Ascending aorta (tissue), 2 donors: ENCODE measurements at regions of chr1 and their contacts with region 1.

Region 1: GRCh38 chr1:42681741-42682483 is at the start of gene YBX1:
- DNase-seq: peak; percentile 93 to 98
- H3K4me3 ChIP-seq: peak within 1 kb of the TSS; percentile 96
- H3K27ac ChIP-seq: peak within 1 kb of the TSS; percentile 84 to 95
- H3K4me1 ChIP-seq: peaks cover 9 to 40% of the 10 kb centered on the region in 2 donors
- H3K27me3 ChIP-seq: no peaks in the 10 kb centered on the region
- CTCF ChIP-seq: no peak
- total RNA-seq, gene YBX1: 356 TPM

Region 2: GRCh38 chr1:42035830-42036604 is 645.9 kb before region 1 on chr1:
- intact Hi-C with region 1: loop called (anchors 5 kb)
- DNase-seq: peak; percentile 81 to 98
- H3K4me3 ChIP-seq: peak overlapping the region; percentile 91 to 99
- H3K27ac ChIP-seq: peak overlapping the region; percentile 31 to 84
- H3K4me1 ChIP-seq: peaks cover 6 to 7% of the 10 kb centered on the region in 2 donors
- H3K27me3 ChIP-seq: no peaks in the 10 kb centered on the region
- CTCF ChIP-seq: no peak

Region 3: DNA sequence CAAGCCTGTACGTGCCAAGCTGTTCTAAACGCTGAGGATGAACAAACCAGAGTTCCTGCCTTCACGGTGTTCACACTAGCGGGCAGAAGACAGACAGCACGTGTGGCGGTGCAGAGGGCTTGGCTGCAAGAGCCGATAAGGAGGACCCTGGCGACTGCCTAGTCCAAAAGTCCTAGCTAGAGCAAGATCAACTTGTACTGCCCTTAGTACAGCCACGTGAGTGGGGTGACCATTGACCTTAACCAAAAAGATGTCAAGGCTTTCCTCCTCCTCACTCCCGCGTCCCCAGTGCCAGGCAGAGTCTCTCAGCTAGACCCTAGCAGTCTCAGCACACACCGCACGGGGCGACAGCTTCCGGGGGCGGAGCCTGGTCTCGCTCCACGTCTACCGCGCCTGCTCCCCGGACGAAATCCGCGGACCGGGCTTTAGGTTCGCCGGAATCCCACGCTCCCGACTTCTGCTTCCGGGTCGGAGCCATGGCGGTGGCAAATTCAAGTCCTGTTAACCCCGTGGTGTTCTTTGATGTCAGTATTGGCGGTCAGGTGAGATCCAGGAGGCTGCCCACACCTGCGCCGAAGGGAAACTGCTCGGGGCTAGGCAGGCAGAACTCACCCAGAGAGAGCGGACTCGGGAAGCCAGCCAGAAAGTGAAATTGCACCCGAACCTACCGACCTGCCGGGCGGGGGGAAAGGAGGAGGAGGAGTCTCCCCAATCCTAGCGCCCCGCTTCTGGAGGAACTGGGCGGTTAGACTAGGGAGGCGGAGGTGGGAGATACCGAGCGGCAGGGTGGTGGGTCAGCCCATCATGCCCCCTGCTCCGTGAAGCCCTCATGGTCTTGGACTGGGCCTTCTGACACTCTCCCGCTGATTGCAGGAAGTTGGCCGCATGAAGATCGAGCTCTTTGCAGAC is 23.7 kb before region 1 on chr1 and contains the start of gene PPIH:
- intact Hi-C with region 1: loop called (anchors 1 kb)
- DNase-seq: peak; percentile 76 to 97
- H3K4me3 ChIP-seq: peak within 1 kb of the TSS; percentile 65 to 72
- H3K27ac ChIP-seq: peak within 1 kb of the TSS; percentile 67 to 78
- H3K4me1 ChIP-seq: peaks cover 3 to 14% of the 10 kb centered on the region in 2 donors
- H3K27me3 ChIP-seq: no peaks in the 10 kb centered on the region
- CTCF ChIP-seq: peak in 2 of 3 experiments; percentile 37 to 40
- total RNA-seq, gene PPIH: 2.2 TPM

Region 4: DNA sequence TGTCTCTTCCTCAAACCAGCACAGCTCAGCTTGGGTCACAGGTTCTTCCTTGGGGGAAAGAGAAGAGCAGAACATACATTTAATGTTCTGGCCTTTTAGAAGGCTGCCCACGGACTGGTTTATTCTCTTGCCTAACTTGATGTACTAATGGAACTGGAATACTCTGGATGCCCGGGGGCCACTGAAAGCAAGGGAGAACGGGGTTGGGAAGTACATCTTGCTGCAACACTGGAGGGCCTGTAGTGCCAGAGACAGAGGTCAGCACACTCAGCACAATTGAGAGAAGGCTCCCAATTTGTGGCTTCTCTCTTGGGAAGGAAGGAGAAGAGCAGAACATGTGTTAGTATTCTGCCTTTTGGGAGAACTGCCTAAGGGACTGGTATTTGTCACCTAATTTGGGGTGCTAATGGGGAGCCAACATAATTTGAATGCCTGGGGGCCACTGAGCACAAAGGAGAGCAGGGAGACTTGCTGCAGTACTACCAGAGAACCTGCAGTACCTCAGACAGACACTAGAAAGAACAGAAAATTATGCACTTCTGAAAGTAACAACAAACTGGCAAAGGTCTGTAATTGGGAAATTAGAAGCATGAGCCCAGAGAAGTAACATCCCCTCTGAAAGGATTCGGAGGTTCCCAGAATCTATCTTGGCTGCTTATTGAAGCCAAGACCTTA is 178.6 kb after region 1 on chr1:
- intact Hi-C with region 1: no loop called
- DNase-seq: no peak
- H3K4me3 ChIP-seq: no peak overlapping the region
- H3K27ac ChIP-seq: no peak overlapping the region
- H3K4me1 ChIP-seq: no peaks in the 10 kb centered on the region
- H3K27me3 ChIP-seq: no peaks in the 10 kb centered on the region
- CTCF ChIP-seq: no peak

Region 5: GRCh38 chr1:43073490-43074230 is 391.7 kb after region 1 on chr1:
- intact Hi-C with region 1: loop called (anchors 2 kb)
- DNase-seq: peak in 1 of 2 donors; percentile 84
- H3K4me3 ChIP-seq: no peak overlapping the region
- H3K27ac ChIP-seq: no peak overlapping the region
- H3K4me1 ChIP-seq: peaks cover 0 to 1% of the 10 kb centered on the region in 2 donors
- H3K27me3 ChIP-seq: no peaks in the 10 kb centered on the region
- CTCF ChIP-seq: peak; percentile 78 to 88 (median 87)

Region 6: GRCh38 chr1:43206600-43207228 is 524.8 kb after region 1 on chr1:
- intact Hi-C with region 1: no loop called
- DNase-seq: no peak
- H3K4me3 ChIP-seq: no peak overlapping the region
- H3K27ac ChIP-seq: no peak overlapping the region
- H3K4me1 ChIP-seq: peaks cover 0 to 15% of the 10 kb centered on the region in 2 donors
- H3K27me3 ChIP-seq: no peaks in the 10 kb centered on the region
- CTCF ChIP-seq: no peak

Region 7: DNA sequence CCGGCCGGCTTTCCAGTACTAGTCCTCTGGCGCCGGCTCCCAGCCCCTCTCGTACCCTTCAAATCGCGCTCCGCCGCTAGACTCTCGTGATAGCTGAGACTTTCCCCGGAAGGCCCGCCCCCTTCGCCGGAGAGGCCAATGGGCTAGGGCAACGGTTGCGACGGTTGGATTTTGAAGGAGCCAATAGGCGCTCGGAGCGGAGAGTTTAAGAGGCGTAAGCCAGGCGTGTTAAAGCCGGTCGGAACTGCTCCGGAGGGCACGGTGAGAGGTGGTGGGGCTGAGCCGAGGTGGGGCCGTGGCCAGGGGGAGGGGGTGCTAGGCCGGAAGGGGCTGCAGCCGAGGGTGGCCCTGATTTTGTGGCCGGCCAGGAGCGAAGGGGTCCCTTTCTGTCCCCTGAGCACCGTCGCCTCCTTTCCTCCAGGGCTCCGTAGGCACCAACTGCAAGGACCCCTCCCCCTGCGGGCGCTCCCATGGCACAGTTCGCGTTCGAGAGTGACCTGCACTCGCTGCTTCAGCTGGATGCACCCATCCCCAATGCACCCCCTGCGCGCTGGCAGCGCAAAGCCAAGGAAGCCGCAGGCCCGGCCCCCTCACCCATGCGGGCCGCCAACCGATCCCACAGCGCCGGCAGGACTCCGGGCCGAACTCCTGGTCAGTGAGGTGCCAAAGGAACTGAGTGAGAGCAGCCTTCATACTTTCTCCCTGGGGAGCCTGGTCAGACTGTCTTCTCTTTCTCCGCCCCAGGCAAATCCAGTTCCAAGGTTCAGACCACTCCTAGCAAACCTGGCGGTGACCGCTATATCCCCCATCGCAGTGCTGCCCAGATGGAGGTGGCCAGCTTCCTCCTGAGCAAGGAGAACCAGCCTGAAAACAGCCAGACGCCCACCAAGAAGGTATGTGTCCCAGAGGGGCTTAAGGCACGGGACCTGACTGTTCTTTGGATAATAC is 677.1 kb after region 1 on chr1 and contains the start of gene CDC20:
- intact Hi-C with region 1: loop called (anchors 5 kb)
- DNase-seq: peak; percentile 96 to 100
- H3K4me3 ChIP-seq: peak within 1 kb of the TSS; percentile 63 to 67
- H3K27ac ChIP-seq: peak within 1 kb of the TSS; percentile 84 to 86
- H3K4me1 ChIP-seq: peaks cover 6 to 7% of the 10 kb centered on the region in 2 donors
- H3K27me3 ChIP-seq: no peaks in the 10 kb centered on the region
- CTCF ChIP-seq: no peak
- total RNA-seq, gene CDC20: not detected